ENCODE measurements at regions of chr14 and their contacts with region 1.

Region 1: DNA sequence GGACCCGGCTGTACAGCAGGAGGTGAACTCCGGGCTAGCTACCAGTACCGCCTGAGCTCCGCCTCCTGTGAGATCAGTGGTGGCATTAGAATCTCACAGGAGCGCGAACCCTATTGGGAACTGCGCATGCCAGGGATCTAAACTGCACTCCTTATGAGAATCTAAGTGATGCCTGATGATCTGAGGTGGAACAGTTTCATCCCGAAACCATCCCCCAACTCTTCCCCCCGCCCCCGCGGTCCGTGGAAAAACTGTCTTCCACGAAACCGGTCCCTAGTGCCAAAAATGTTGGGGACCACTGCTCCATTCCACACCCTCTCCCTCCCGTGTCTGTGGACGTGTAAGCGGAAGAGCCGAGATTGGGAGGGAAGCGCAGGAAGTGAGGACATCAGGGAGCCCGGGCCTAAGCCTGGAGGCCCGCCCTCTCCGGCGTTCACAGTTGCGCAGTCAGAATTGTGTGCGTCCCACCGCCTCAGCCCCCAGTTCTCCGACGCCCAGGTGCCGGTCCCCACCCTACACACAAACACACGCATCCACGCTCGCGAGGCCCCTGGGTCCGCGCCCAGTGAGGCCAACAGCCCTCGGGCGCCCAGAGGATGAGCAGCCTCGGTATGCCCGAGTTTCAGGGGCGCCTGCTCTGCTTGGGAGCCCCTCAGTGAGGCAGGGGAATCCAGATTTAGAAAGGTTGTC is 1.8 kb upstream of the RNASE4 start:
- DNase-seq: peak; percentile 86
- ATAC-seq: peak; percentile 69
- H3K4me3 Mint-ChIP-seq: no peak overlapping the region
- H3K27ac Mint-ChIP-seq: no peak overlapping the region
- H3K4me1 Mint-ChIP-seq: peaks cover 19% of the 10 kb centered on the region
- H3K27me3 Mint-ChIP-seq: no peaks in the 10 kb centered on the region
- CTCF ChIP-seq: no peak

Region 2: DNA sequence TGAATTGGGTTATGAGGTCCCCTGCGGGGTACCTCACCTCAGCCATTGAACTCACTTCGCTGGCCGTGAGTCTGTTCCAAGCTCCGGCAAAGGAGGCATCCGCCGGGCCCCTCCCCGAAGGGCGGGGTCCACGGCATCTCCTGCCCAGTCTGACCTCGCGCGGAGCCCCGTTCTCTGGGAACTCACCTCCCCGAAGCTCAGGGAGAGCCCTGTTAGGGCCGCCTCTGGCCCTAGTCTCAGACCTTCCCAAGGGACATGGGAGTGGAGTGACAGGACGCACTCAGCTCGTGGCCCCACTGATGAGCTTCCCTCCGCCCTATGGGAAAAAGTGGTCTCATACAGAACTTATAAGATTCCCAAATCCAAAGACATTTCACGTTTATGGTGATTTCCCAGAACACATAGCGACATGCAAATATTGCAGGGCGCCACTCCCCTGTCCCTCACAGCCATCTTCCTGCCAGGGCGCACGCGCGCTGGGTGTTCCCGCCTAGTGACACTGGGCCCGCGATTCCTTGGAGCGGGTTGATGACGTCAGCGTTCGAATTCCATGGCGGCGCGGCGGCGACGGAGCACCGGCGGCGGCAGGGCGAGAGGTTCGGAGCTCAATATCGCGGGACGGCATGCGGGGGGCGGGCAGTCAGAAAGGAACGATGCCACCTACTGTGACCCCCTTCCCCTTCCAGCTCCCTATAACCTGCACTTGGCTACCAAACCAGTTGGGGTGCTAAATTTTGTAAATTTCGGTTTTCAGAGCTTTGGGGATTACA is 339.3 kb before region 1 on chr14 and contains the start of gene PARP2:
- CTCF ChIA-PET with region 1: interaction called, 12 read pairs
- POLR2A ChIA-PET with region 1: interaction called, 16 read pairs
- intact Hi-C with region 1: loop called (anchors 5 kb)
- DNase-seq: peak; percentile 96
- ATAC-seq: peak; percentile 91
- H3K4me3 Mint-ChIP-seq: peak within 1 kb of the TSS; percentile 89
- H3K27ac Mint-ChIP-seq: peak within 1 kb of the TSS; percentile 96
- H3K4me1 Mint-ChIP-seq: peaks cover 11% of the 10 kb centered on the region
- H3K27me3 Mint-ChIP-seq: no peaks in the 10 kb centered on the region
- CTCF ChIP-seq: no peak
- total RNA-seq, gene PARP2: 45.7 to 46.5 TPM

Region 3: DNA sequence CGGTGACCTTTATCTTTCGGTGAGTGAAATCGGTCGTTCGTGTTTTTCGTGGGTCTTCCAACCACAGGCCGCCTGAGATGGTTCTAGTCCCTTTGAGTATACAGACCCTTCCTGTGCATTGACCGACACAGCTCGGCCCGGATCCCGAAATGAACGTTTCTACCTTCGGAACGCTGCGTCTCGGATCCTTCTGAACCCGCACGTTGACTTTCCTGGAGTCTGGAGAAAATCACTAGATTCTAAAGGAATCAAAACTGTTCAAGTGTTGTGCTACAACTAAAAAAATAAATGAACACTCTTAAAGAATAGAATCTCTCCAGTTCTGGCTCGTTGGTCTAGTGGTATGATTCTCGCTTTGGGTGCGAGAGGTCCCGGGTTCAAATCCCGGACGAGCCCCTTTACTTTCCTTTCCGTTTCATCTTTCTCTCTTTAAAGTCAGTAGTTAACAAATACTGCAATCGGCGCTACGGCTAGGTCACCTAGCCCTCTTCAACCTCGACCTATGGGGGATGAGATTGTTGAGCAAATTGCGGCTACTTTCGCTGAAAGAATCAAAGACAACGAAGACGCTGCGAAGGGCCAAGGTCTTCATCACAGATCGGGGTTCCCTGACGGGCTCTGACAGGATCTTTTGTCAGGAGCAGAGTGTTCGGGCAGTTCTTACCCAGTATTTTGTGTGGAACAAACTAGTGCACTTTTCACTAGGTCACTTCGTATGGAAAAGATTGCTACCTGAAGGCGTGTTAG is 49.7 kb before region 1 on chr14:
- CTCF ChIA-PET with region 1: interaction called, 36 read pairs
- POLR2A ChIA-PET with region 1: interaction called, 24 read pairs
- intact Hi-C with region 1: loop called (anchors 2 kb)
- DNase-seq: peak; percentile 92
- ATAC-seq: peak; percentile 87
- H3K4me3 Mint-ChIP-seq: peak overlapping the region; percentile 80
- H3K27ac Mint-ChIP-seq: peak overlapping the region; percentile 76
- H3K4me1 Mint-ChIP-seq: peaks cover 35% of the 10 kb centered on the region
- H3K27me3 Mint-ChIP-seq: peaks cover 31% of the 10 kb centered on the region
- CTCF ChIP-seq: no peak

Region 4: DNA sequence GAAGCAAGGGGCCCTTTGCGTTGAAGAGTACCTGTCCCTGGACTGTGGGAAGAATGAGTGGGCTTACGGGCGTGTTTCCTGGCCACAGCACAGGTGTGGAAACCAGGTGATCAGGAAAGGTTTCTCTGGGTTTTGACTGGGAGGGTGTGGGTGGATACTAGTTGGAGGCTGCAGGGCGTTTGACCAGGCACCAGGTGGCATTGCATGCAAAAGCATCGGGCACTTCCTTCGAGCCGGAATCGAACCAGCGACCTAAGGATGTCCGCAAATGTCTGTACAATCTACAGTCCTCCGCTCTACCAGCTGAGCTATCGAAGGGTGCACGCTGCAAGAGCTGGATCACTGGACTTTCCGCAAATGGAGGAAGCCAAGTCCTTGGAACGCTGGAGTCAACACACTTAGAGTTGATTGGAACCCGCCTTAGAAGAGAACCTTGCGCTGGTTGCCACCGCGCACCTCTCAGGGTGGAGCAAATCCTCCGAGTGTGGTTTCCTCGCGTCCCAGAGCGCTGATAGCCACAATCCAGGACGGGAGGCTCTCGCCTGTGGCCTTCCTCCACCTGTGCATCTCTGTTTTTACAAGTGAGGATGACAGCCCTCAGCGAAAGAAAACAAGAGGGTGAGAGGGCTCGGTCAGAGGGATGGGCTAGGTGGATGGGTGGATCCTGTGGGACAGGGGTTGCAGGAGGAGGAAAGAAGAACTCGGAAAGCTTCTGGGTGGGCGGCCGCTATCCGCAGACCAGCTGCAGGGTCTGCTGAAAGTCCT is 19.4 kb before region 1 on chr14:
- CTCF ChIA-PET with region 1: interaction called, 53 read pairs
- POLR2A ChIA-PET with region 1: interaction called, 8 read pairs
- intact Hi-C with region 1: no loop called
- DNase-seq: peak; percentile 93
- ATAC-seq: peak; percentile 93
- H3K4me3 Mint-ChIP-seq: peak overlapping the region; percentile 75
- H3K27ac Mint-ChIP-seq: no peak overlapping the region
- H3K4me1 Mint-ChIP-seq: peaks cover 20% of the 10 kb centered on the region
- H3K27me3 Mint-ChIP-seq: peaks cover 10% of the 10 kb centered on the region
- CTCF ChIP-seq: peak; percentile 78

Measured in activated CD8-positive, alpha-beta T cell treated with anti-CD3 and anti-CD28 coated beads for 36 hours (primary cell).